ENCODE measurements at regions of chr10 and their contacts with region 1.

Region 1: DNA sequence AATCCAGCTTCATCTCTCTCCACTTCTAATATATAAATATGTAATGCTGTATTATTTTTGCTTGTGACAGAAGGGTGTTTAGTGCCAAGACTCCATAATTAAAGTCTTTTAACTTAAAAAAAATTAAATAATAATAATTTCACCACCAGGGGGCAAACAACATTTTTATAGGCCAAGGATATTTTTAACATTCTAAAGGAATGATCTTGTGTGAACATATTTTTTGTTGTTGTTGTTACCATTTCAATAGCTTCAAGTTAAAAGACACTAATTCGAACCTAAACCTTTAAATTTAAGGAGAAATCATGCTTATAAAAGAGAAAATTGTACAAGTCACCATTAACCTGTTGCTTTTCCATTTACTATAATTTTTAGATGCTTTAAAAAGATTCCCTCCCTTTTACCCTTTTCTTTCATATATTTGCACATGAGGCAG is 7.5 kb upstream of the DNAJC1 start:
- DNase-seq: peak; percentile 33
- H3K4me3 ChIP-seq: no peak overlapping the region
- H3K27ac ChIP-seq: no peak overlapping the region
- H3K4me1 ChIP-seq: no peaks in the 10 kb centered on the region
- H3K27me3 ChIP-seq: peaks cover 2 to 29% of the 10 kb centered on the region in 2 experiments
- CTCF ChIP-seq: no peak
- POLR2A ChIP-seq: no peak

Region 2: DNA sequence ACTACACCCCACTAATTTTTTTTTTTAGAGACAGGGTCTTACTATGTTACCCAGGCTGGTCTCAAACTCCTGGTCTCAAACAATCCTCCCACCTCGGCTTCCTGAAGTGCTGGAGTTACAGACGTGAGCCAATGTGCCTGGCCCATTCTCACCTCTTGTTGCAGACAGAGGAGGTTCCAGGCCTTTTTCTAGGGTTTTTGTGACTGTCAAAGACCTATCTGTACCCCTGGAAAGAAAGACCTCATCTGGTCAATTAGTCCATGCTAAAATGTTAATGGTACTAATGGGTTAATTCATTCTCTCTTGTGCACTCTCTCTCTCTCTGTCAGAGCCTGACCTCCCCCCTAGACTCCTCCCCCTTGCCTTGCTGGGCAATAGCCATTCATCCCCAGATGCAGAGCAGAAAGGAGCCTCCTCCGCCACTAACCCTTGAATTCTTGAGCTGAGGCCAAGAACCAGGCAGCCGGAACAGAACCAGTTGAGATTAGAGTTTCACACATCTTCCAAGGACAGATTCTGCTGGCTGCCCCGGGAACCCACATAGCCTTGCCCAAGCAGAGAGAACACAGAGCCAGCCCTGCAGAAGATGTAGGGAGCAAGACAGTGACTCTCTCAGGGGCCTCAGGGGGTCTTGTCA is 695.2 kb before region 1 on chr10:
- CTCF ChIA-PET with region 1: no interaction called
- POLR2A ChIA-PET with region 1: no interaction called
- dilution Hi-C with region 1: no loop called
- intact Hi-C with region 1: no loop called
- DNase-seq: peak; percentile 90
- H3K4me3 ChIP-seq: no peak overlapping the region
- H3K27ac ChIP-seq: peak overlapping the region; percentile 50
- H3K4me1 ChIP-seq: peaks cover 24% of the 10 kb centered on the region
- H3K27me3 ChIP-seq: no peaks in the 10 kb centered on the region
- CTCF ChIP-seq: no peak
- POLR2A ChIP-seq: peak; percentile 31

Region 3: GRCh38 chr10:22420787-22421517 is 410.0 kb after region 1 on chr10:
- CTCF ChIA-PET with region 1: interaction called, 3 read pairs
- POLR2A ChIA-PET with region 1: no interaction called
- dilution Hi-C with region 1: no loop called
- intact Hi-C with region 1: loop called (anchors 1 kb)
- DNase-seq: peak; percentile 47
- H3K4me3 ChIP-seq: no peak overlapping the region
- H3K27ac ChIP-seq: no peak overlapping the region
- H3K4me1 ChIP-seq: no peaks in the 10 kb centered on the region
- H3K27me3 ChIP-seq: no peaks in the 10 kb centered on the region
- CTCF ChIP-seq: peak in 1 of 2 donors; percentile 9
- POLR2A ChIP-seq: no peak

Region 4: GRCh38 chr10:23067939-23068775 is 1057.2 kb after region 1 on chr10:
- CTCF ChIA-PET with region 1: no interaction called
- POLR2A ChIA-PET with region 1: no interaction called
- dilution Hi-C with region 1: no loop called
- intact Hi-C with region 1: loop called (anchors 1 kb)
- DNase-seq: peak; percentile 65
- H3K4me3 ChIP-seq: no peak overlapping the region
- H3K27ac ChIP-seq: no peak overlapping the region
- H3K4me1 ChIP-seq: no peaks in the 10 kb centered on the region
- H3K27me3 ChIP-seq: no peaks in the 10 kb centered on the region
- CTCF ChIP-seq: peak; percentile 70 to 83
- POLR2A ChIP-seq: no peak

Measured in endothelial cell of umbilical vein (primary cell).